ENCODE measurements at regions of chr11 and their contacts with region 1.

Region 1: DNA sequence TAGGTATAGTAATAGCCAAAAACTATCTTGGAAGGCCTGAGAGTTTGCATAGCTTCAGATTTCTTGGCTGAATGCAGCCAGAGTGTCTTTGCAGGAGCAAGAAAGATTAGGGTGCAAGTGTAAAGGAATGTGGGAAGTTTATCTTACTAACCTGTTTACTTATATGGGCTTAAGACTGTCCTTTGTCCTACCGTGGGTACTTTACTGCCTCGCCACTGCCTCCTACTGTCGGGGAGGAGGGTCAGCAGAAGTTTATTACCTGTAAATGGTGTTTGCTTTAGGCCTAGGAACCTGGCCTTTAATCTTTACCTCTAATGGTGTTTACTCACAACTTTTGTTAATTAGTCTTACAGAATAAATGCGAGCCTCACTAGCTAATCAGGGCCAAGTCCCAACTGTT is 633.8 kb downstream of the DLG2 start:
- DNase-seq: no peak
- H3K4me3 ChIP-seq: no peak overlapping the region
- CTCF ChIP-seq: peak; percentile 43

Region 2: GRCh38 chr11:84800755-84801346 is 192.5 kb before region 1 on chr11:
- CTCF ChIA-PET with region 1: interaction called, 14 read pairs
- POLR2A ChIA-PET with region 1: no interaction called
- DNase-seq: peak; percentile 19
- H3K4me3 ChIP-seq: no peak overlapping the region
- CTCF ChIP-seq: peak; percentile 31

Region 3: DNA sequence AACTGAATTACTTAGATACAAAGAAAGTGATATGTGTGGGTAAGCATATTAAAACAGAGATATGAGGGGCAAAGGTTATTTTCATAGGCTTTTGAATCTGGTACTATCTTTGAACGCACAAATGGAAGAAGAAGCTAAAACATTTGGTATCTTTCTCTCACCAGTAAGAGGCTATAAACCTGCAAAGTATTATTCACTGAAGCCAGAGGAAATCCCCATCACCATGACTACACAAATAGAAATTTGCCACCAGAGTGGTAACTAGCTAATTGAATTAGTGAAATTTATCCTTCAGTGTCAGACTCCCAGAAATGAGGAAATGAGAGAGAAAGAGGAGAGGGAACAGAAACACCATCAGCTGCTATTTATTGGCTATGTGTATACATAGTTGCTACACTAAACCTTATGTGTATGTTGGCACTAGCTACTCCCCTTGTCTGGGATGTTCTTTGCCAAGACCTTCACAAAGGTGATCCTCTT is 130.4 kb after region 1 on chr11:
- CTCF ChIA-PET with region 1: no interaction called
- POLR2A ChIA-PET with region 1: no interaction called
- DNase-seq: no peak
- H3K4me3 ChIP-seq: no peak overlapping the region
- CTCF ChIP-seq: no peak